Activated naive CD4-positive, alpha-beta T cell treated with anti-CD3 and anti-CD28 coated beads for 36 hours (primary cell): ENCODE measurements at regions of chr2 and their contacts with region 1.

Region 1: GRCh38 chr2:101341901-101342624 is 33.6 kb upstream of the RNF149 start:
- DNase-seq: peak; percentile 84
- H3K4me3 Mint-ChIP-seq: no peak overlapping the region
- H3K27ac Mint-ChIP-seq: no peak overlapping the region
- H3K4me1 Mint-ChIP-seq: peaks cover 19% of the 10 kb centered on the region
- H3K27me3 Mint-ChIP-seq: no peaks in the 10 kb centered on the region

Region 2: DNA sequence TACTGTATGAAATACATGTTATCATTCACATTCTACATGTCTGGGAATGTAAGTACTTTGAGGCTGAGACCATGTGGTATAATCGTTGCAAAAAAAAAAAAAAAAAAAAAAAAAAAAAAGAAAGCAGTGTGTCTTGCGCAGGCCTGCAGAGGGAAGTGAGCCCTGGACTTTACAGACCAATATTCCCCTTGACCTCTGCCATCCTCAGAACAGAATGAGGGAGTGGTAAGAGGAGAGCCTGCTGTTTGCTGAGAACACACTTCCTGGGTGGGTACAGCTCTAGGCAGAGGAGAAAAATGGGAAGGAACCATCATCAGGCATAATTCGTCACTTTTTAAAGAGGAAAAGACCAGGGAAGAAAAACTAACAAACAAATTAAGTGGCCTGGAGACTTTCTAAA is 162.1 kb before region 1 on chr2:
- CTCF ChIA-PET with region 1: no interaction called
- intact Hi-C with region 1: no loop called
- DNase-seq: no peak
- H3K4me3 Mint-ChIP-seq: no peak overlapping the region
- H3K27ac Mint-ChIP-seq: no peak overlapping the region
- H3K4me1 Mint-ChIP-seq: peaks cover under 1% of the 10 kb centered on the region
- H3K27me3 Mint-ChIP-seq: no peaks in the 10 kb centered on the region

Region 3: DNA sequence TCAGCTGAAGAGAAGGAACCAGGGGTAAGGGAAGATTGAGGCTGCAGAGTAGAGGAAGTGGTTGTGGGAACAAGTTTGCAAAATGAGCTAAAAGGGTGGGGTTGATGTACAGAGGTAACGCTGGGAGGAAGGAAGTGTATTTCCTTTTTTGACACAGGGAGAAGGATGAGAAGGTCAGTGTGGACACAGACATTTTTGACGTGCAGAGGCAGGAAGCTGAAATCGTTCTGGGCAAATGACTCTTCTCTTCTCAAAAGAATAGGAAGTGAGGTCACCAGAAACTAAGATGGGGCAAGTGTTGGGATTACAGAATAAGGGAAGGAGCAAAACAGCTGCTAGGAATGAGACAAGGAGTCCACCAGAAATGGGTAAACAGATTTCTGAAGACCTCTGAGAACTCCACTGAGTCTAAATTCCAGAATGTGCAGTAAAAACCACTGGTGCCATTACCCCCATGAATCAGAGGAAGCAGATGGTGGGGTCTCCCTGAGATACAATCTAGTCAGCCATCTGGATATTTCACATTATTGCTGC is 13.5 kb before region 1 on chr2:
- CTCF ChIA-PET with region 1: interaction called, 22 read pairs
- intact Hi-C with region 1: no loop called
- DNase-seq: peak; percentile 60
- H3K4me3 Mint-ChIP-seq: no peak overlapping the region
- H3K27ac Mint-ChIP-seq: no peak overlapping the region
- H3K4me1 Mint-ChIP-seq: peaks cover 18% of the 10 kb centered on the region
- H3K27me3 Mint-ChIP-seq: no peaks in the 10 kb centered on the region

Region 4: GRCh38 chr2:101361121-101361870 is 19.2 kb after region 1 on chr2:
- CTCF ChIA-PET with region 1: interaction called, 15 read pairs
- intact Hi-C with region 1: no loop called
- DNase-seq: peak; percentile 49
- H3K4me3 Mint-ChIP-seq: no peak overlapping the region
- H3K27ac Mint-ChIP-seq: no peak overlapping the region
- H3K4me1 Mint-ChIP-seq: peaks cover 22% of the 10 kb centered on the region
- H3K27me3 Mint-ChIP-seq: no peaks in the 10 kb centered on the region

Region 5: DNA sequence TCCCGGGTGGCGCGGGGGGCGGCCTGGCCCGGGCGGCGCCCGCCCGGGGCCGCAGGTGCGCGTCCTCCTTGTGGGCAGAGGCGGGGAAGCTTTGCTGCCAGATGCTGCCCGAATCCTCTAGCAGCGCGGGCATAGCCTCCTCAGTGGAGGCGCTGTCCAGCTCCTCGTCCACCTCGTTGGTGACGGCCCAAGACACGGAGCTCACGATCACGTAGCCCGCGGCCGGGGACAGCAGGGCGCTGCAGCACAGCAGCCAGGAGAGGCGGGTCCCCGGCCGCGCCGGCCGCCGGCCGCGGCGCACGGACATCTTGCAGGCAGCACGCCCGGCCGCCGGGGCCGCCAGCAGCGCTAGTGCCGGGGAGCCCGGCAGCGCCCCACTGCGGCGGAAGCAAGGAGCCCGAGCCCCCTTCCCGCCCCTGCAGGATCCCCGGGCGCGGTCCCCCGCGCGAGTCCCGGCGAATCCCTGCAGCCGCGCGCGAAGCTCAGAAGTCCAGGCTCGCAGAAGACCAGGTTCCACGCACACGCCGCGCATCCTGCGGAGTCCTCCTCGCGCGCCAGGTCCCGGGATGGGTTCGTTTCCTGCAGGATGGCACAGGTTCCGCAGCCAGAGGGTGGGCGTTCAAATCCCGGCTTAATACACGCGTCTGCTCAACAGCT is 45.2 kb after region 1 on chr2 and contains the start of gene CREG2:
- CTCF ChIA-PET with region 1: interaction called, 23 read pairs
- intact Hi-C with region 1: loop called (anchors 1 kb)
- DNase-seq: peak; percentile 60
- H3K4me3 Mint-ChIP-seq: peak within 1 kb of the TSS; percentile 61
- H3K27ac Mint-ChIP-seq: no peak within 1 kb of the TSS
- H3K4me1 Mint-ChIP-seq: peaks cover 11% of the 10 kb centered on the region
- H3K27me3 Mint-ChIP-seq: peaks cover 41% of the 10 kb centered on the region
- total RNA-seq, gene CREG2: not detected

Region 6: DNA sequence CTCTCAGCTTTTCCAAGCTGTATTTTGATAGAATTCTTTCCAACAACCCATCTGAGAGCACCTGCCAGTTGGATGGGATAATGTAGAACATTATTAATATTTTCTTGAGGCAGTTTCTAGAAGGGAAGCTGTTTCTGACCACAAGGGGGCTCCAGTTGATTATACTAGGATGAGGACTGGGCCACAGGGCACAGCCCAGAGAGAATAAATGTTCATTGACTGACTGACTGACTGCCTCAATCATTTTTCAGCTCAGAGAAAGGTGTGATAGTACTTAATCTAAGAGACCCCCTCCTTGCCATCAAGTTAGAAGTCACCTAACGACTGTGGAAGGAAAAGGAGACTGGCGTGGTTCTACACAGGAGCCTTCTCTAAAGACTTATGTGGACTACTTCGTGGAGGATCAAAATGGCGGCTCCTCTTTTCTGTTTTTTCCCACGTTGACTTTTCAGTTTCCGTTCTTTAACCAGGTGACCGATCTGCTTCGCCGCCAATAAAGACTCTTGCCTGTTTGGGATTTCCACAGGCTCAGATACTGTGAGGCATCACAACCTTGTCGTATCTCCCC is 77.1 kb after region 1 on chr2:
- CTCF ChIA-PET with region 1: interaction called, 14 read pairs
- intact Hi-C with region 1: loop called (anchors 1 kb)
- DNase-seq: peak; percentile 82
- H3K4me3 Mint-ChIP-seq: no peak overlapping the region
- H3K27ac Mint-ChIP-seq: no peak overlapping the region
- H3K4me1 Mint-ChIP-seq: no peaks in the 10 kb centered on the region
- H3K27me3 Mint-ChIP-seq: no peaks in the 10 kb centered on the region